IMR-90 (cell line): ENCODE measurements at regions of chr10 and their contacts with region 1.

Region 1: GRCh38 chr10:76311752-76312636 is 880.6 kb downstream of the LRMDA start:
- DNase-seq: no peak
- ATAC-seq: peak; percentile 52
- H3K4me3 ChIP-seq: no peak overlapping the region
- H3K27ac ChIP-seq: no peak overlapping the region
- H3K4me1 ChIP-seq: peaks cover 7% of the 10 kb centered on the region
- H3K27me3 ChIP-seq: 0 out of 2 replicates have a peak, but pooled peaks cover 2% of the 10 kb centered on the region
- CTCF ChIP-seq: peak; percentile 33; the same call in 1 of the 2 replicates
- POLR2A ChIP-seq: no peak
- RAD21 ChIP-seq: peak; percentile 20; the same call in 1 of the 2 replicates

Region 2: DNA sequence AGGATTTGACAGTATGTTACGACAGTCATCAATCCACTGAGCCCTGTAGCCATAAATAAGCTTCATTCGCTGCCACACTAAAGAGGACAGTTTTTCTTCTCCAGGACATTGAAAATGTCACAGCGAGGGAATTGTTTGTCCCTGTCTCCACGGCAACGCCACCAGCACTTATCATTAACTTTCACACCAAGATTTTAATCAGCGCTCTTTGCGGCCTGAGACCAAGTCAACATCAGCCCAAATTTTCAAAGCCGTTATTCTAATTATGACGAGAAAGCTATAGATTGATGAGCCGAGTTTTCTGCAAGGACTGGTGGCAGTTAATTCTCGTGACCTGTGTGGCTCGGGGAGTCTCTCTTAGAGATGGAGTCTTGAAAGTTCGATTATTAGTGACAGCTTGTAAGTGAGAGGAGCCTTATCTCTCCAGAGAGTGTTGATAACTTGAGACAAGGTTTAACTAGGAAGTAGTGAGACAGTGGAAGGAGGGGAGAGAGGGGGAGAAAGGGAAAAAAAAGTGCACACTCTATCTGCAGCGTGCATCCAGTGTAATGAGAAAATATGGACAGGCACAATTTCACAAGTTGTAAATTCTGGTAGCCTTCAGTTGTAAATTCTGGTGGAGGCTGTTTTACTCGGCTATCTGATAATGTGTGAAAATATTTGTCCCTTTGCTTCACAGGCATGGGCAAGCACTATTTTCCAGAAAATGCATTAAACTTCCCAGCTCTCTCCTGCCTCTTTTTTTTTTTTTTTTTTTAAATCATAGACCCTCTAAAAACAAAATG is 407.3 kb before region 1 on chr10:
- CTCF ChIA-PET with region 1: no interaction called
- POLR2A ChIA-PET with region 1: no interaction called
- dilution Hi-C with region 1: no loop called
- in situ Hi-C with region 1: no loop called
- intact Hi-C with region 1: no loop called
- DNase-seq: no peak
- ATAC-seq: no peak
- H3K4me3 ChIP-seq: no peak overlapping the region
- H3K27ac ChIP-seq: no peak overlapping the region
- H3K4me1 ChIP-seq: no peaks in the 10 kb centered on the region
- H3K27me3 ChIP-seq: peaks cover 5% of the 10 kb centered on the region
- CTCF ChIP-seq: no peak
- POLR2A ChIP-seq: no peak
- RAD21 ChIP-seq: no peak

Region 3: GRCh38 chr10:76265441-76266080 is 46.4 kb before region 1 on chr10:
- CTCF ChIA-PET with region 1: no interaction called
- POLR2A ChIA-PET with region 1: no interaction called
- dilution Hi-C with region 1: no loop called
- in situ Hi-C with region 1: no loop called
- intact Hi-C with region 1: no loop called
- DNase-seq: no peak
- ATAC-seq: no peak
- H3K4me3 ChIP-seq: no peak overlapping the region
- H3K27ac ChIP-seq: no peak overlapping the region
- H3K4me1 ChIP-seq: no peaks in the 10 kb centered on the region
- H3K27me3 ChIP-seq: no peaks in the 10 kb centered on the region
- CTCF ChIP-seq: no peak
- POLR2A ChIP-seq: no peak
- RAD21 ChIP-seq: no peak

Region 4: DNA sequence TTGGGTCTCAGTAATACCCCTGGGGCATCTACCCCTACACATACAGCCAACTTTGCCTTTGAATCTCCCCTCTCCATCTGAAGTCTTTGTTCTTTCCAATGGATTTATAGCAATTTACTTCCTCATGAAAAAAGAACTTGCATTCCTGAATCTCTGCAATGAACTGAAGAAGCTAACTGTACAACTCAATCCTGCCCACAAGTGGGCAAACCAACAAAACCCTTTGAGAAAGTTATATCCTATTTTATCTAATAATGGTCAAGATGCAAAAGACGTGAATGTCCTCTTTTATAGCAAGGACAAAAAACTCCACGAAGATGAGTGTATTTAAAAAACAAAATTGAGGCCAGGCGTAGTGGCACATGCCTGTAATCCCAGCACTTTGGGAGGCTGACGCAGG is 110.8 kb after region 1 on chr10:
- CTCF ChIA-PET with region 1: no interaction called
- POLR2A ChIA-PET with region 1: no interaction called
- dilution Hi-C with region 1: no loop called
- in situ Hi-C with region 1: no loop called
- intact Hi-C with region 1: no loop called
- DNase-seq: peak; percentile 30
- ATAC-seq: peak; percentile 53; the same call in 1 of the 2 replicates
- H3K4me3 ChIP-seq: no peak overlapping the region
- H3K27ac ChIP-seq: no peak overlapping the region
- H3K4me1 ChIP-seq: no peaks in the 10 kb centered on the region
- H3K27me3 ChIP-seq: no peaks in the 10 kb centered on the region
- CTCF ChIP-seq: peak; percentile 45
- POLR2A ChIP-seq: no peak
- RAD21 ChIP-seq: peak; percentile 37; the same call in 1 of the 2 replicates

Region 5: GRCh38 chr10:76984559-76985443 is 672.8 kb after region 1 on chr10:
- CTCF ChIA-PET with region 1: no interaction called
- POLR2A ChIA-PET with region 1: no interaction called
- dilution Hi-C with region 1: no loop called
- in situ Hi-C with region 1: no loop called
- intact Hi-C with region 1: loop called (anchors 5 kb)
- DNase-seq: peak; percentile 79
- ATAC-seq: peak; percentile 85
- H3K4me3 ChIP-seq: no peak overlapping the region
- H3K27ac ChIP-seq: no peak overlapping the region
- H3K4me1 ChIP-seq: no peaks in the 10 kb centered on the region; the same call in 1 of the 2 replicates
- H3K27me3 ChIP-seq: peaks cover 3% of the 10 kb centered on the region; the same call in 1 of the 2 replicates
- CTCF ChIP-seq: peak; percentile 81
- POLR2A ChIP-seq: no peak
- RAD21 ChIP-seq: peak; percentile 72